Dendritic cell treated with granulocyte-macrophage colony-stimulating factor and Interleukin-4, amounts not matched to agents 40 ng/mL and 50 ng/mL, for 4 days (primary cell): ENCODE measurements at regions of chr1 and their contacts with region 1.

Region 1: GRCh38 chr1:156608036-156608674 is 6.9 kb upstream of the GPATCH4 start:
- H3K4me3 Mint-ChIP-seq: no peak overlapping the region
- H3K27ac Mint-ChIP-seq: no peak overlapping the region
- H3K4me1 Mint-ChIP-seq: peaks cover 18% of the 10 kb centered on the region
- H3K27me3 Mint-ChIP-seq: peaks cover 30% of the 10 kb centered on the region

Region 2: DNA sequence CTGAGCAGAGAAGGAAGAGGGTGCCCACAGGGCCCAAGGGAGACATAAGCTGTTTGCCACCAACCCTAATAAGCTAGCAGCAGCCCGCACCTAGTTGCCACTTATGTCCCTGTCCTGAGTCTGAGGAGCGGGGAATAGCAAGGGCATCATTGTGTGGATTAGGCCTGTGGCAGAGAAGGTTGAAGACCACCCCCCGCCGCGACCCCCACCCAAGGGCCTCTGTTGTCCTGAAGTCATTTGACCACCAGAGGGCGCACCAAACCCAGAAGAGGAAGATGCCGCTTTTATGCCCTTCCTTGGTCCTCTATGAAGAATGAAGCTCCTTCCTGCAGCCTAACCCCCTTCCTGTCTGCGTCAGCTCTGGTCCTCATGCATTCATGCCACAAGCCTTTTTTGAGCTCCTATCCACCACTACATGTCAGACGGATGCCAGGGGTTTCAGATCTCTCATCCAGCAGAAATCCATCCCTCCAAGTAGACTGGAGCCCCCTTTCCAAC is 222.6 kb before region 1 on chr1:
- intact Hi-C with region 1: loop called (anchors 5 kb)
- H3K4me3 Mint-ChIP-seq: no peak overlapping the region
- H3K27ac Mint-ChIP-seq: no peak overlapping the region
- H3K4me1 Mint-ChIP-seq: peaks cover 32% of the 10 kb centered on the region
- H3K27me3 Mint-ChIP-seq: peaks cover 56% of the 10 kb centered on the region

Region 3: GRCh38 chr1:156480411-156481192 is 127.6 kb before region 1 on chr1:
- intact Hi-C with region 1: no loop called
- H3K4me3 Mint-ChIP-seq: no peak overlapping the region
- H3K27ac Mint-ChIP-seq: peak overlapping the region; percentile 78
- H3K4me1 Mint-ChIP-seq: peaks cover 61% of the 10 kb centered on the region
- H3K27me3 Mint-ChIP-seq: no peaks in the 10 kb centered on the region

Region 4: DNA sequence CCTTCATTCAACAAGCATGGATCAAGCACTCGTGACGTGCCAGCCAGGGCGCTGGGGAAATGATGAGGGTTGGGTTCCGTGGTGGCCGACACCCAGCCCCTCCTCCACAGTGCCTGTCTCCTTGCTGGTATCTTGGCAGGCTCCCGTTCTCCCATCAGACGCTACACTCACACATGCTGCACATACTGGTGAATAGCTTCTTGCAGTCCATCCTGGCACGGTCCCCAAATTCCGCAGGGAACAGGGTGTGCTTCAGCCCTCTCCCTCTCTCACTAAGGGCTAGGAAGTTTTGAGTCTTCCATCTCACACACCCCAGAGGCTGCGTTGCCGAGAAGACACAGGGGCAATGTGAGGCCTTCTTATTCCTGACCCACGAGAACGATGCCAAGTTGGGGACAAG is 97.4 kb before region 1 on chr1:
- intact Hi-C with region 1: no loop called
- H3K4me3 Mint-ChIP-seq: no peak overlapping the region
- H3K27ac Mint-ChIP-seq: peak overlapping the region; percentile 2
- H3K4me1 Mint-ChIP-seq: peaks cover 49% of the 10 kb centered on the region
- H3K27me3 Mint-ChIP-seq: no peaks in the 10 kb centered on the region

Region 5: DNA sequence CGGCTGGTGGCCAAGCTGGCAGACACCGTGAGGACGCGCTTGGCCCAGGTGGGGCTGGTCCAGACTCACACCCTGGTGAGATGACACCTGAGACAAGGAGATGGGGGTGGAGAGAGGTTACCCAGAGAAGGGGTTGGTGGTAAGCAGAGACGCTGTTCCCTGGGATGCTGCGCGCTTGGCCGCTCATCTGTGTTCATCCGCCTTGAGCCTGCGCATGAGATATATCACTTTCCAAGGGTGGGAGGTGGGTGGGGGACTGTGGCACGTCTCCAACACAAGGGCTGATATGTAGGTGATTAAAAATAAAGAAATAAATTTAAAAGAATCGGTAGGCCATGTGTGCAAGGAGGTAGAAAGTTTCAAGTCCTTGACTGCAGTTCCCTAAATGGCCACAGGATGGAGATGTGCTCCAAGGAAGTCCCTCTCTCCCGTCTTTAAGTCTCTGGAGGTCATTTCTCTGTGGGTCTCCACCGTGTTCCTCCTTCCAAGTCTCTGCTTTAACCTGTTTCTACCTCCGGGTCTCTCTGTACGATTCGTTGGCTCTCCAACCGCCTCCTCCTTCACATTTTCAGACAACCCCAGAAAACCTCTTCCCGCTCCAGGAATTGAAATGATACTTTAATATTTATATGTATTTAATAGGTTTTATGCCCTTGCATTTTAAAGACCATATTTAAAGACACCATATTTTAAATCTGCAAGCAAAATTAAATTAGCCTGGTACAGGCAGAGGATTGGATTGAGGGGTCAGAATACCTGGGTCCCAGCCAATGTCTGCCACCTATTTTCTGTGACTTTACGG is 24.1 kb before region 1 on chr1:
- intact Hi-C with region 1: loop called (anchors 1 kb)
- H3K4me3 Mint-ChIP-seq: no peak overlapping the region
- H3K27ac Mint-ChIP-seq: no peak overlapping the region
- H3K4me1 Mint-ChIP-seq: peaks cover 26% of the 10 kb centered on the region
- H3K27me3 Mint-ChIP-seq: peaks cover 5% of the 10 kb centered on the region

Region 6: GRCh38 chr1:157104598-157105293 is 496.6 kb after region 1 on chr1:
- intact Hi-C with region 1: no loop called
- H3K4me3 Mint-ChIP-seq: no peak overlapping the region
- H3K27ac Mint-ChIP-seq: peak overlapping the region; percentile 90
- H3K4me1 Mint-ChIP-seq: peaks cover 81% of the 10 kb centered on the region
- H3K27me3 Mint-ChIP-seq: peaks cover 18% of the 10 kb centered on the region